PC-3 (cell line): ENCODE measurements at regions of chr12 and their contacts with region 1.

Region 1: GRCh38 chr12:113184900-113185773 is at the starts of genes DDX54 and RITA1:
- DNase-seq: peak; percentile 89
- ATAC-seq: peak; percentile 87
- H3K4me3 ChIP-seq: peak within 1 kb of the TSS; percentile 95
- H3K27ac ChIP-seq: peak within 1 kb of the TSS; percentile 91
- H3K4me1 ChIP-seq: peaks cover 24% of the 10 kb centered on the region
- H3K27me3 ChIP-seq: no peaks in the 10 kb centered on the region
- CTCF ChIP-seq: no peak
- total RNA-seq, gene DDX54: 158 and 309 TPM in 2 replicates
- total RNA-seq, gene RITA1: 66.8 and 71.6 TPM in 2 replicates

Region 2: GRCh38 chr12:113232840-113233585 is 47.9 kb after region 1 on chr12:
- CTCF ChIA-PET with region 1: no interaction called
- POLR2A ChIA-PET with region 1: no interaction called
- intact Hi-C with region 1: no loop called
- DNase-seq: no peak
- ATAC-seq: no peak
- H3K4me3 ChIP-seq: no peak overlapping the region
- H3K27ac ChIP-seq: no peak overlapping the region
- H3K4me1 ChIP-seq: no peaks in the 10 kb centered on the region
- H3K27me3 ChIP-seq: no peaks in the 10 kb centered on the region
- CTCF ChIP-seq: no peak

Region 3: DNA sequence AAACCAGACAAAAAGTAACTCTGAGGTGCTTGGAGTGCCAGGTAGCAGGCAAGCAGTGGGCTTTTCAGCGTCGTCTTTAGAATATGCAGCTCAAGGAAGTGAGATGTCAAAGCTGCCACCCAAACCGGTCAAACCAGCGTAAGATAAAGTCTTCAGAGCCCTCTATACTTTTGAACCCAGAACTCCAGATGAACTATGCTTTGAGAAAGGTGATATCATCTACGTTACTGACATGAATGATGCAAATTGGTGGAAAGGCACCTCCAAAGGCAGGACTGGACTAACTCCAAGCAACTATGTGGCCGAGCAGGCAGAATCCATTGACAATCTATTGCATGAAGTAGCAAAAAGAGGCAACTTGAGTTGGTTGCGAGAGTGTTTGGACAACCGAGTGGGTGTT is 1403.0 kb after region 1 on chr12:
- CTCF ChIA-PET with region 1: no interaction called
- POLR2A ChIA-PET with region 1: interaction called, 18 read pairs
- intact Hi-C with region 1: no loop called
- DNase-seq: no peak
- ATAC-seq: no peak
- H3K4me3 ChIP-seq: no peak overlapping the region
- H3K27ac ChIP-seq: no peak overlapping the region
- H3K4me1 ChIP-seq: no peaks in the 10 kb centered on the region
- H3K27me3 ChIP-seq: peaks cover 7% of the 10 kb centered on the region; the same call in 1 of the 2 replicates
- CTCF ChIP-seq: no peak